ENCODE measurements at regions of chr15 and their contacts with region 1.

Region 1: GRCh38 chr15:76931397-76932007 is at the start of gene RCN2:
- DNase-seq: peak; percentile 98
- total RNA-seq, gene RCN2: 30.3 TPM

Region 2: DNA sequence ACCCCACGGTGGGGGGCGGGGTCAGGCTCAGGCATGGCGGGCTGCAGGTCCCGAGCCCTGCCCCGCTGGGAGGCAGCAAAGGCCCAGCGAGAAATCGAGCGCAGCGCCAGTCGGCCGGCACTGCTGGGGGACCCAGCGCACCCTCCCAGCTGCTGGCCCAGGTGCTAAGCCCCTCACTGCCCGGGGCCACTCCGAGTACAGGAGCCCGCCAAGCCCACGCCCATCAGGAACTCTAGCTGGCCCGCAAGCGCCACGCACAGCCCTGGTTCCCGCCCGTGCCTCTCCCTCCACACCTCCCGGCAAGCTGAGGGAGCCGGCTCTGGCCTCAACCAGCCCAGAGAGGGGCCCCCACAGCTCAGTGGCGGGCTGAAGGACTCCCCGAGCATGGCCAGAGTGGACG is 55.6 kb before region 1 on chr15:
- intact Hi-C with region 1: no loop called
- DNase-seq: no peak

Region 3: GRCh38 chr15:76905013-76905839 is 26.3 kb before region 1 on chr15 and contains the start of gene SCAPER:
- intact Hi-C with region 1: loop called (anchors 1 kb)
- DNase-seq: peak; percentile 98
- total RNA-seq, gene SCAPER: 31.9 TPM

Region 4: DNA sequence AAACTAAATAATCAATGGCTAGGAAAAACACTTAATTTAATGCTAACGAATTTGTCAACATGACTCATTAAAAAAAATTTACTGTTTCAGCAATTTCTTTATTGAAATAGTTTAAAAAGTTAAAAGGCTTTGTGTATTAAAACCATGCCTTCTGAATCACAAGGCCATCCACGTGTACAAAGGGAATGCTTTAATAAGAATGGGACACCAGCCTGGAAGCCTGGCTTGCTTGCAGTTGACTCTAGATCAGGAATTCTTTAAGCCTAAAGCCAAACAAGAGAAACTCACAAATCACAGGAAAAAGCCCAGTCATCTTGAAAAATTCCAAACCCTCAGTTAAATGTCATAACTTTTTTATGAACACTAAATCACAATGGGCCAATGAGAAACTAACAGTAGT is 350.8 kb after region 1 on chr15:
- intact Hi-C with region 1: no loop called
- DNase-seq: no peak